PC-3 (cell line): ENCODE measurements at regions of chrX and their contacts with region 1.

Region 1: GRCh38 chrX:150365051-150365989 is 2.2 kb downstream of the MAMLD1 start:
- DNase-seq: peak; percentile 57
- ATAC-seq: peak; percentile 16
- H3K4me3 ChIP-seq: peak overlapping the region; percentile 91
- H3K27ac ChIP-seq: peak overlapping the region; percentile 52
- H3K4me1 ChIP-seq: peaks cover 25% of the 10 kb centered on the region
- H3K27me3 ChIP-seq: no peaks in the 10 kb centered on the region
- CTCF ChIP-seq: peak; percentile 61

Region 2: GRCh38 chrX:149962859-149963757 is 402.2 kb before region 1 on chrX:
- CTCF ChIA-PET with region 1: interaction called, 3 read pairs
- POLR2A ChIA-PET with region 1: interaction called, 3 read pairs
- intact Hi-C with region 1: loop called (anchors 2 kb)
- DNase-seq: peak; percentile 77
- ATAC-seq: peak; percentile 96
- H3K4me3 ChIP-seq: no peak overlapping the region
- H3K27ac ChIP-seq: no peak overlapping the region
- H3K4me1 ChIP-seq: 0 out of 2 replicates have a peak, but pooled peaks cover 6% of the 10 kb centered on the region
- H3K27me3 ChIP-seq: no peaks in the 10 kb centered on the region
- CTCF ChIP-seq: peak; percentile 88

Region 3: DNA sequence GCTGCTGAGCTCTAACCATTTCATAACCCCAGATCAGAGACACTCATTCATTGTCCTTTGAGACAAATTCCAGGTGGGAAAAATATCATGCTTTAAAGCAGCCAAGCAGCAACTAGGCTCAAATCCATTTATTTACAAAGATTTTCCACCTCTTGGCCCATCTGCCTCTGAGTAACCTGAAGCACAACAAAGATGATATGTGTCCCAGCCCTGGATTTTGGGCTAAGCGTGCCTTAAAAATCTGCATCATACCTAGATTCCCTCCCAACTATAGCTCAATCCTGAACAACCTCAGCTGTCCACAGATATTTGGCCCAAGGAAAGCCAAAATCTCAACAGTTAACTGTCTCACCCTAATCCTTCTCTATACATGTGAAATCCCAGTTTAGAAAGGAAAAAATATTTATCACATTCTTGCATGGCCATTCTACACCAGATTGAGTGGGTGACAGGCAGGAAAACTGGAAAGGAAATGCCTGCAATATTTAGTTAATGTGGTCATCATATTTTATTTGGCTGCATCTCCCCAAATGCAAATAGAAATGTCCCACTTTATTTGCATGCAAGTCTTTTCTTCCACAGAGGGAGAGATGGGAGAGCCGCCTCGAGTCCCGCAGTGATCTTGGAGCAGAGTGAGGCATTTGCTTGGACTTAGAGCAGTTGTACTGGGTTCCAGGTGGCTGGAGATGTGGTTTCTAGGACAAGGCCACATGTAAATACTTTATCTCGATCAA is 280.7 kb before region 1 on chrX:
- CTCF ChIA-PET with region 1: no interaction called
- POLR2A ChIA-PET with region 1: no interaction called
- intact Hi-C with region 1: loop called (anchors 2 kb)
- DNase-seq: peak; percentile 87
- ATAC-seq: peak; percentile 83
- H3K4me3 ChIP-seq: peak overlapping the region; percentile 11; the same call in 1 of the 2 replicates
- H3K27ac ChIP-seq: peak overlapping the region; percentile 94
- H3K4me1 ChIP-seq: peaks cover 33% of the 10 kb centered on the region
- H3K27me3 ChIP-seq: no peaks in the 10 kb centered on the region
- CTCF ChIP-seq: no peak

Region 4: DNA sequence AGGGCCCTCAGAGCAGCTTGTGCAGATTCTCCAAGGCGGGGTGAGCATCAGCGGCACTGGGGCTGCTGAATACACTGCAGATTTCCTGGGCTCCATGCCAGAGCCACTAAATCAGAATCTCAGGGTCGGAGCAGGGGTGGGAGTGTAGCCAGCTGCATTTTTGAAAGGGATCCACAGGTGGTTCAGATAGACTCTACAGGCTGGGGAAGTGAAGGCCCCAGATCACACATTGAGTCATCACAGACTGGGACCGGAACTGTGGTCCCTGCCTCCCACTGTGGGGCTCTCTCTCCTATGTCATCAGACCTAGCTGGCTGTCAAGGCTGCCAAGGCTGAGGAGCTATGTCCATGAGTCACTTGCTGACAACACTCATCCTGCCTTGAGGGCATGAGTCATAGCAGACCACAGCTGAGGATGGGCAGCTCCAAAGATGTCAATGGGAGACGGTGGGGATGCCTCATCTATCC is 164.5 kb before region 1 on chrX:
- CTCF ChIA-PET with region 1: interaction called, 3 read pairs
- POLR2A ChIA-PET with region 1: no interaction called
- intact Hi-C with region 1: loop called (anchors 5 kb)
- DNase-seq: peak; percentile 98
- ATAC-seq: peak; percentile 94
- H3K4me3 ChIP-seq: no peak overlapping the region
- H3K27ac ChIP-seq: peak overlapping the region; percentile 89
- H3K4me1 ChIP-seq: peaks cover 37% of the 10 kb centered on the region
- H3K27me3 ChIP-seq: no peaks in the 10 kb centered on the region
- CTCF ChIP-seq: no peak

Region 5: GRCh38 chrX:150486011-150486410 is 120.7 kb after region 1 on chrX:
- CTCF ChIA-PET with region 1: no interaction called
- POLR2A ChIA-PET with region 1: no interaction called
- intact Hi-C with region 1: loop called (anchors 2 kb)
- DNase-seq: peak; percentile 61
- ATAC-seq: peak; percentile 71; the same call in 1 of the 2 replicates
- H3K4me3 ChIP-seq: no peak overlapping the region
- H3K27ac ChIP-seq: no peak overlapping the region
- H3K4me1 ChIP-seq: peaks cover 14% of the 10 kb centered on the region
- H3K27me3 ChIP-seq: no peaks in the 10 kb centered on the region
- CTCF ChIP-seq: peak; percentile 78

Region 6: DNA sequence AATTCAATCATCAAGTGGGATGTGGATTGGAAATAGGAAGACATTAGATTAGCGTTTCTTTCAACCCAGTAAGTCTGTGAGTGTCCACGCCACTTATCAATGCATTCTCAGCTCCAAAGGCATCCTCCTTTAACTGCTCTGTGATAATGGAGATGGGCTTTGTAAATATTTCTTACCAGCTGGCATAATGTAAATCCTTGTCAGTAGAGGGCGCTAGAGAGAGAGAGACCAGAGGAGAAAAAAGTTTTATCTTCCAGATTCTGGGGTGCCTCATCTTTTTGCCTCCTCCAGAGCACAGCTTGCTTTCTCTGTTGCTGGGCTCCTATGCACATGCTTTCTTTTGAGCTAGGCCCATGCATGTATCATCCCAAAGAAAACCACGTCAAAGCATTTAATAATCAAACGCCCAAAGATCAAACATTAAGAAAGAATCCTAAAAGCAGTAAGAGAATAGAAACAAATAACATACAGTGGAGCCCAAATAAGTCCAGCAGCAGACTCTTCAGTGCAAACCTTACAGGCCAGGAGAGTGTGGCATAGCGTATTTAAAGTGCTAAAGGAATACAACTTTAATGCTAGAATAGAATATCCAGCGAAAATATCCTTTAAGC is 318.3 kb after region 1 on chrX:
- CTCF ChIA-PET with region 1: no interaction called
- POLR2A ChIA-PET with region 1: no interaction called
- intact Hi-C with region 1: loop called (anchors 5 kb)
- DNase-seq: peak; percentile 74
- ATAC-seq: peak; percentile 43; the same call in 1 of the 2 replicates
- H3K4me3 ChIP-seq: no peak overlapping the region
- H3K27ac ChIP-seq: no peak overlapping the region
- H3K4me1 ChIP-seq: peaks cover 7% of the 10 kb centered on the region
- H3K27me3 ChIP-seq: no peaks in the 10 kb centered on the region
- CTCF ChIP-seq: peak; percentile 69

Region 7: DNA sequence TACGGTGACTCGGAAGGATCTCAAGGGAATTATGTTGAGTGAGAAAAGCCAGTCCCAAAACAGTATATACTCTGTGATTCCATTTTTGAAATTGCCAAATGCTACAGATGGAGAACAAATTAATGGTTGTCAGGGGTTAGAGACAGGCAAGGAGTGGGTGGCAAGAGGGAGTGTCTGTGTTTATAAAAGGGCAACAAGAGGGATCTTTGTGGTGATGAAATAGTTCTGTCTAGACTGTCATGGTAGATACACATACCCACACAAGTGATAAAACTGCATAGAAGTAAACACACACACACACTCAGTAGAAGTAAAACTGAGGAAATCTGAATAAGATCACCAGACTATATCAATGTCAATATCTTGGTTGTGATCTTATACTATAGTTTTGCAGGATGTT is 440.4 kb after region 1 on chrX:
- CTCF ChIA-PET with region 1: no interaction called
- POLR2A ChIA-PET with region 1: no interaction called
- intact Hi-C with region 1: no loop called
- DNase-seq: no peak
- ATAC-seq: no peak
- H3K4me3 ChIP-seq: no peak overlapping the region
- H3K27ac ChIP-seq: no peak overlapping the region
- H3K4me1 ChIP-seq: no peaks in the 10 kb centered on the region
- H3K27me3 ChIP-seq: no peaks in the 10 kb centered on the region
- CTCF ChIP-seq: no peak